ENCODE measurements at regions of chrX and their contacts with region 1.

Region 1: DNA sequence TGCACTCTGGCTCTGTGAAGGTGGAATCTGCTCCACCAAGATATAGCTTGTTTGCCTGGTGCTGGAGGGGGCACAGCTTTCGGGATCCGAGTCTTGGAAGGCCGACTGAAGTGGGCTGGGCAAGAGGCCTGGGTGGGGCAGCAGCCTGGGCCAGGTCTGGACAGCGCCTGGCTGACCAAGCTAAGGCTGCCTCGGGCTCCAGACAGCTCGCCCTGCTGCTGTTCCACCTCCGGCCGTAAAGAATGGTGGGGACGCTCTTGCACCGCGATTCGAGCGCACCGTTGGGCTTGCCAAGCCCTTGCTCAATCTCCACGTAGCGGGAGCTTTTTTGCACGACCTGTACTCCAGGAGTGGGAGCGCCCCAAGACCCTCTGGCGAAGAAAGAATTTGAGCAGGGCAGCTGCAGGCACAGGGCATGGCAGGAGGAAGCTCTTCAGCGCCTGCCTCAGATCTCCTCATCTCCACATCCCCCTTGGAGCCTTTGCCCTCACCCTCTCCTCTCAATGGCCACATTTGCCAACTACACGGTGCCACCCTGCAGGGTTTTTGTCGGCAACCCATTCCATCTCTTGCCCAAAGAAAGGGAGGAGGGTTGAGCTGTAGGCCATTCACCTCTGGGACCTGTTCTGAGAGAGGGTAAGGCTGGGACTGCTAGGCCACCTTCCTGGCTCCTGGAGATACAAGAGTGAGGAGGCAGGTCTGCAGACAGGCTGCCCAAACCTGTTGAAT is 18.9 kb downstream of the CNGA2 start:
- DNase-seq: peak; percentile 84
- H3K4me3 ChIP-seq: no peak overlapping the region
- H3K27ac ChIP-seq: peak overlapping the region; percentile 33; the same call in 1 of the 2 replicates
- H3K4me1 ChIP-seq: peaks cover 12% of the 10 kb centered on the region
- H3K27me3 ChIP-seq: no peaks in the 10 kb centered on the region

Region 2: DNA sequence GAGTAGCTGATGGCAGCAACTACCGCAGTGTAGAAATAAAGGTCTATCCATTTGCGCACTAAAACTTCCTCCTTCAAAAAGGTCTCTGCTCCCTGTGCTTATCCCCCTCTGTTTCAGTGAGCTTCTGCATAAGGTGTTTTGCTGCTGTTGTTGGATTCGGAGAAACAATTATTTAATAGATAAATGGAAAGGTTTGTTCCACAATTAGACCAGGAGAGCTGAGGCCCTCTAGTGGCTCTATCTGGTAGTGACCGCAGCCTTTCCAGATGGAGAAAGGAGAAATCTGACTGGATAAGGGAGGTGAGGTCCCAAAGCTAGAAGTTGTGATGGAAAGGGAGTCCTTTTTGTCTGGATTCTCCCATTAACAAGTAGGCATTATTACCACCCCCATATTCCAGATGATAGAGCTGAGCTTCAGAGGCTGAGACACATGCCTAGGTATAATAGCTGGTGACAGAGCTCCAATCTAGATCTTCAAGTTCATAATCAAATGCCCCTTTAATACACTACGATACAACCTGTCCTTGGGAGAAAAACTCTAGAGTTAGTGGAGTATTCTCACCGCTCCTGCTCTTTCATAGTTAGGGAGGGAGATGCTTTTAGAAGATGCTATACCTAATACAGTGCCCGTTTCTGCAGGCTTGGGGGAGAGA is 879.1 kb after region 1 on chrX:
- in situ Hi-C with region 1: loop called (anchors 25 kb)
- DNase-seq: peak; percentile 49
- H3K4me3 ChIP-seq: no peak overlapping the region
- H3K27ac ChIP-seq: no peak overlapping the region
- H3K4me1 ChIP-seq: no peaks in the 10 kb centered on the region
- H3K27me3 ChIP-seq: no peaks in the 10 kb centered on the region

Region 3: DNA sequence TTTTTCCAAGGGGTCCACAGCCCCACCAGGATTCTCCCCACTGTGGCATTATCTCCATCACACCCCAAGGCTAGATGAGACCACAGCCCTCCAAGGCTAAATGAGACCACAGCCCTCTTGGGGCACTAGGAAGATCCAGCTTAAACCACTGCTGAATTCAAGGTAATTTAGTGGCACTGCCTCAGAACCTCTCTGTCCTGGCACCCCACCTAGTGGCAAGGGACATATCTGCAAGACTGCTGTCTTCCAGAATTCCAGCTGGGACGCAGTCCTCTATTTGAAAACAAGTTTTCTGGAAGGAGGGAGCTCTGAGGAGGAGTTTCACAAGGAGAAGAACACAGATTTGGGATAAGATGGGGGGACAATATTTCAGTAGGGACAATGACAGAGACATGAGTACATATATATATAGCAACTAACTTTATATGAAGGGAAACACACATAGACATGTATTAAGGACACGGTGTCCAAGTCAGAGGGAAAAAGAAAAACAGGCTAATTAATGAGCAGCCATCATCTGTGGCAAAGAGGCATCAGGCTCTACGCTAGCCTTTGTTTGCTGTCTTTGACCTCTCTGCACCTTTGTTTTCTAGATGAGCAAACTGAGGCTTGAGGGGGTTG is 1067.8 kb after region 1 on chrX:
- in situ Hi-C with region 1: loop called (anchors 25 kb)
- DNase-seq: peak; percentile 64
- H3K4me3 ChIP-seq: no peak overlapping the region
- H3K27ac ChIP-seq: no peak overlapping the region
- H3K4me1 ChIP-seq: peaks cover 20% of the 10 kb centered on the region
- H3K27me3 ChIP-seq: no peaks in the 10 kb centered on the region